ENCODE measurements at regions of chr18 and their contacts with region 1.

Region 1: DNA sequence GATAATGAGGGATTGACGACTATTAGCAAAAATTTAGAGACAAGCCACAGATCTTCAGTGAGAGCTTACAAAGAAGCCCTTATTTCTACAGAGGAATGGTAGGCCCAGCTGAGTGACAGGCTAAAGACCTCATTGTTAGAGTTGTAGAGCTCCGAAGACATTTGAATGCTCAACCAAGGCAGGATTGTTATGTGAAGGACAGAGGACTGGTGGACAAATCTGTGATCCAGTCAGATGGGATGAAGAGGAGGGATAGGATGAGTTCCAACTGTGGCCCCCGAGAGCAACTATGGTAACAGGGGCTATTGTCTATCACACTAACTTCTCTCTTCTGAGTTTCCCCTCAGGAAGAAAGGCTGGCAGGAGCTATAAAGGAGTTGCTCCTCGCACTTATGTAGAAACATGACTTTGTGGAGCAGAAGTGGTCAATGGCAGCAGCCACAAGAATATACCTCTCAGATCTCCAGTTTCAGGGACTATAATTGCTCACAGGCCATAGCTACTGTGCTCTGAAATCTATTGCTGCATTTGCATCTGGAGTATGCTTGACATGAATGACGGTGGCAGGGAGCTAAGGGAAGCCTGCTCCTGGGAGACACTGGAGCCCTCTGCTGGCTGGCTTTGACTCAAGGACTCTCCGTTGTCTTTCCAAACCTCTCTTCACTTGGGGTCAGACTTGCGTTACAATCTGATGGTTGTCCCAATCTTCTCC is 50.3 kb upstream of the GREB1L start:
- DNase-seq: peak; percentile 72
- H3K4me3 ChIP-seq: no peak overlapping the region
- H3K27ac ChIP-seq: no peak overlapping the region
- H3K4me1 ChIP-seq: no peaks in the 10 kb centered on the region
- H3K27me3 ChIP-seq: peaks cover 3% of the 10 kb centered on the region
- CTCF ChIP-seq: peak; percentile 76

Region 2: DNA sequence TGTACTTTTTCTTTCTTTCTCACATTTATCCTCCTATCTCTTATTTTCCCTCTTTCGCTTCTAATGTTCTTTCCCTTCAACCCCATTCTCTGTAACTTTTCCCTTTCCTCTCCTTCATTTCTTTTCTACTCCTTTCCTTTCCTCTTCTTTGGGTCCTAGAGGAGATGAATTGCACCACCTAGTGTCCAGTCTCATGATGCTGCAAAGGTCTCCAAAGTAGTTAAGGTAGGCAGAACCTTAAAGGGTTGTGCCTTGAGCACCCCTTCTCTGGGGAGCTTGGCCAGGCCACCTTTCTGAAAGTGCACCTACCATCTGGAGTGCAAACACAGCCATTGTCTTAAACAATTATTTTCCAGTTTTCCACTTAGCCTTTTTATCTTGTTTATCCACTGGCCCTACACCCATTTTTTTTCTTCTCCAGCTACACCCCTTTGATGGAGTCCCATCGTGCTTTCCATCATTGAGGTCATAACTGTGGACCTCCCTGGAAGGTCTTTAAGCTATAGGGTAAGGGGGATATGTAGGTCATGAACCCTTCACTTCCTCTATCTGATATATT is 252.8 kb after region 1 on chr18:
- CTCF ChIA-PET with region 1: interaction called, 4 read pairs
- POLR2A ChIA-PET with region 1: no interaction called
- intact Hi-C with region 1: loop called (anchors 1 kb)
- DNase-seq: peak; percentile 55
- H3K4me3 ChIP-seq: no peak overlapping the region
- H3K27ac ChIP-seq: no peak overlapping the region
- H3K4me1 ChIP-seq: no peaks in the 10 kb centered on the region
- H3K27me3 ChIP-seq: peaks cover 17% of the 10 kb centered on the region
- CTCF ChIP-seq: peak; percentile 89

Measured in A673 (cell line).